Naive thymus-derived CD4-positive, alpha-beta T cell (primary cell): ENCODE measurements at regions of chr4 and their contacts with region 1.

Region 1: GRCh38 chr4:112652216-112652615 is 15.3 kb downstream of the LARP7 start:
- DNase-seq: no peak
- ATAC-seq: no peak
- H3K4me3 ChIP-seq: no peak overlapping the region
- H3K4me3 Mint-ChIP-seq: no peak overlapping the region
- H3K27ac ChIP-seq: no peak overlapping the region
- H3K27ac Mint-ChIP-seq: no peak overlapping the region
- H3K4me1 ChIP-seq: no peaks in the 10 kb centered on the region
- H3K4me1 Mint-ChIP-seq: no peaks in the 10 kb centered on the region
- H3K27me3 ChIP-seq: no peaks in the 10 kb centered on the region
- H3K27me3 Mint-ChIP-seq: no peaks in the 10 kb centered on the region

Region 2: GRCh38 chr4:112938461-112939058 is 286.3 kb after region 1 on chr4:
- CTCF ChIA-PET with region 1: no interaction called
- POLR2A ChIA-PET with region 1: no interaction called
- intact Hi-C with region 1: loop called in 1 of 2 experiments (anchors 5 kb)
- DNase-seq: peak in 3 of 9 donors; percentile 3 to 14 (median 4)
- ATAC-seq: no peak
- H3K4me3 ChIP-seq: no peak overlapping the region
- H3K4me3 Mint-ChIP-seq: no peak overlapping the region
- H3K27ac ChIP-seq: no peak overlapping the region
- H3K27ac Mint-ChIP-seq: no peak overlapping the region
- H3K4me1 ChIP-seq: no peaks in the 10 kb centered on the region
- H3K4me1 Mint-ChIP-seq: no peaks in the 10 kb centered on the region
- H3K27me3 ChIP-seq: no peaks in the 10 kb centered on the region
- H3K27me3 Mint-ChIP-seq: peaks cover 9 to 26% (median 23%) of the 10 kb centered on the region in 5 donors